ENCODE measurements at regions of chr19 and their contacts with region 1.

Region 1: DNA sequence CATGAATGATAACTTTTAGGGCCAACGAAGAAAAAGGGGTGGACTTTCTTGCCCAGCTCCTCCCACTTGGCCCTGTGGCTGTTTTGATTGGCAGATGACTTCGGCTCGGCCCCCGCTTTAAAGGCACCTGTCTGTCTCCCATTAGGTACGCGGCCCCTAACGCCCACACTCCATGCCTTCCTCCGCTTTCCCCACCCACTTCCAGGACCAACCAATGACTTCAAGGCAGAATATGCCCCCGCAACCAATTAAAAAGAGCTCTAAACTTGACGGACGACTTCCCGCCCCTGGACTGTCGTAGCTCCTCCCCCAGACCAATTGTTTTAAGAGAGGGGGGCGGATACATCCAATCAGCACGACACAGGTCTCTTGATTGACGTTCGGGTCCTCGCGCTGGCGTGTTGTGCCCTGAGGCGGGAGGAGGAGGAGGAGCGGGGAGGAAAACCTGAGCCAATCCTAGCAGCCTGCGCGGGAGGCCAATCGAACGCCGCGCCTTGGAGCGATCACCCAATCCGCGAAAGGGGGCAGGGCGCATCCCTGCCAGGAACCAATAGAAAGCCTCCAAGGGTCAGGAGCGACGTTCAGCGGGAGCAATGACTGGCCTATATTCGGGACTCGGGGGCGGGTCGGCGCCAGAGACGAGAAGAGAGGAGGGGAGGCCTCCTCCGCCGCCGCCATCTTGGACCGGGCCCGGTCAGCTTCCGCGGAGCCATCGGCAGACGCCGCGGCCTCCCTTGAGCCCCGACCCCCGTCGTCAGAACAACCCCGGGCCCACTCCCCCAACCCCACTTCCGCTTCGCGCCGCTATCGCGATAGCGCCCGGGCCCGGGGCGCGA is at the start of gene CNOT3:
- DNase-seq: peak; percentile 100
- ATAC-seq: peak; percentile 89
- H3K4me3 Mint-ChIP-seq: peak within 1 kb of the TSS; percentile 92
- H3K27ac Mint-ChIP-seq: peak within 1 kb of the TSS; percentile 98
- H3K4me1 Mint-ChIP-seq: peaks cover 35% of the 10 kb centered on the region
- H3K27me3 Mint-ChIP-seq: no peaks in the 10 kb centered on the region
- CTCF ChIP-seq: no peak
- total RNA-seq, gene CNOT3: 90.7 to 96.8 TPM (median 93.3 TPM) in 3 replicates

Region 2: DNA sequence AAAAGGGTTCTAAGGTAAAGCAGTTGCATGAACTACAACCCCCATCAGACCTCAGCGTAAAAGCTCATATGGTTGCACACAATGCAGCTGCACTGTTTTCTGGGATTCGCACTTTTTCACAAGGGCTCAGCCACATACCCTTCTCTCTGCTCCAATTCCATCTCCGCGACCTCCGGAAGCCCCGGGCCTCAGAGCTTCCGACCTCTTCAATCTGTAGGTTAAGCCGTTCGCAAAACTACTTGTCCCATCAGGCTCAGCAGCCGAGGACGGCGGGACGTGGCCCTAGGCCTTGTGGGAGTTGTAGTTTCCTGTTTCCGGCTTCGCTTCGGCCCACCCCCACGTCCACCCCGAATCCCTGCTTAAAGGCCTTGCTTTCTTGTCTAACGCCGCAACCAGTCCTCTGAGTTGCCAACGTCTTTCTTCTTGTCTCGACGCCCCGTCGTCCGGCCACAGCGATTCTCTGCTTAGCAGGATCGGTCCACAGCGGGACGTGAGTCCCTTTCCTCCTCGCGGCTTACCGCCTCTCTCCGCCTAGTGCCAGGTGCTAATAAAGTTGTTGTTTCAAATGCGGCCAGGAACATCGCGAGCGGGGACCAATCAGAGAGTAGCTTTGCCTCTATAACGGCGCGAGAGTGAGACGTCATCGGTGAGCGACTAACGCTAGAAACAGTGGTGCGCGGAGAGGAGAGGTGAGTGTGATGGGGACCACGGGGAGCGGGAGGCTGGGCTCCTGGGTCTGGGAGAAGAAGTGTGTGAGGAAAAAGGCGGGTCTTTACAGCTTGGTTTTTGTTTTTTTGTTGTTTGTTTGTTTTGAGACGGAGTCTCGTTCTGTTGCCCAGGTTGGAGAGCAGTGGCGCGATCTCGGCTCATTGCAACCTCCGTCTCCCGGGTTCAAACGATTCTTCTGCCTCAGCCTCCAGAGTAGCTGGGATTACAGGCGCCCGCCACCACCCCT is 21.9 kb before region 1 on chr19 and contains the starts of genes PRPF31 and TFPT:
- CTCF ChIA-PET with region 1: interaction called, 9 read pairs
- POLR2A ChIA-PET with region 1: interaction called, 23 read pairs
- DNase-seq: peak; percentile 97
- ATAC-seq: peak; percentile 93
- H3K4me3 Mint-ChIP-seq: peak within 1 kb of the TSS; percentile 95
- H3K27ac Mint-ChIP-seq: peak within 1 kb of the TSS; percentile 93
- H3K4me1 Mint-ChIP-seq: peaks cover 22% of the 10 kb centered on the region
- H3K27me3 Mint-ChIP-seq: no peaks in the 10 kb centered on the region; the same call in 1 of the 2 replicates
- CTCF ChIP-seq: no peak
- total RNA-seq, gene PRPF31: 82.3 to 92.8 TPM (median 89.5 TPM) in 3 replicates
- total RNA-seq, gene TFPT: 20.5 to 24.6 TPM (median 24.2 TPM) in 3 replicates

Region 3: GRCh38 chr19:54148158-54148919 is 11.0 kb after region 1 on chr19:
- CTCF ChIA-PET with region 1: no interaction called
- POLR2A ChIA-PET with region 1: interaction called, 11 read pairs
- DNase-seq: no peak
- ATAC-seq: no peak
- H3K4me3 Mint-ChIP-seq: no peak overlapping the region
- H3K27ac Mint-ChIP-seq: peak overlapping the region; percentile 53; the same call in 1 of the 2 replicates
- H3K4me1 Mint-ChIP-seq: no peaks in the 10 kb centered on the region
- H3K27me3 Mint-ChIP-seq: no peaks in the 10 kb centered on the region; the same call in 1 of the 2 replicates
- CTCF ChIP-seq: no peak

Region 4: DNA sequence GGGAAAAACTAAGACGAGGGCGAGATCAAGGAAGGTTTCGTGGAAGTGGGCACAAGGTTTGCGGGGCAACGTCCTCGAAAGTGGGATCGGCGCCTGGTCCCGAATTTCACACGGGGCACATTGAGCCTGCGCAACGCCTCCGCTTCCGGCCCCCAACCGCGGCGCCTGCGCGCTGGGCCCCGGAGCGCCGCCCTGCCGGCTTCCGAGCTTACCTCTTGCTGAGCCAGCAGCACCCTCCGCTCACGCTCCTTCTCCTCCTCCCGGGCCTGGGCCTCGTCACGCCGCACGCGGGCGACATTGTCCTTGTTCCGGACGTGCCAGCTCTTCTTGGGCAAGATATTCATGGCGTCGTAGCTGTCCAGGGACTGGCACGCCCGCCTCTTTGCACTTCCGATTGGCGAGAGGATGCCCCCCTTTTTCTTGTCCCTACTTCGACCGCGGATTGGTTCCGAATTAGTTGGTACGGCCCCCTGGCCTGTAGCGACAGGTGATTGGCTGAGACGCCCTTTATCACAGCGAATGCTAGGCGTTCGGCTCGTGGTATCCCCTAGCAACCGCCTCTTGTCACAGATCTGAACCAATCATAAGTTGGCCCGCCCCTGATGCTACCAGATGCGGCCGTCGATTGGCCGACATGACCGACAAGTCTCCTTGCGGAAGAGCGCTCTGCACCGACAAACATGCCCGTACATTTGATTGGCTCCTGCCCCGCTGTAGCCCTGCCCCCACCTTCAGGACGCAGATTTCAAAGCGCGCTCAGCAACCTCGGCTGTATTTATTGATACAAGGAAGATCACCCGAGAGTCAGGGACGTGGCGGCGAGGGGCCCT is 22.3 kb after region 1 on chr19 and contains the start of gene LENG1:
- CTCF ChIA-PET with region 1: interaction called, 7 read pairs
- POLR2A ChIA-PET with region 1: interaction called, 10 read pairs
- DNase-seq: peak; percentile 99
- ATAC-seq: peak; percentile 80
- H3K4me3 Mint-ChIP-seq: peak within 1 kb of the TSS; percentile 100
- H3K27ac Mint-ChIP-seq: peak within 1 kb of the TSS; percentile 99
- H3K4me1 Mint-ChIP-seq: peaks cover 35% of the 10 kb centered on the region
- H3K27me3 Mint-ChIP-seq: peaks cover 24% of the 10 kb centered on the region
- CTCF ChIP-seq: no peak
- total RNA-seq, gene LENG1: 4.6 to 5.4 TPM (median 4.9 TPM) in 3 replicates

Region 5: GRCh38 chr19:54281007-54281728 is 143.9 kb after region 1 on chr19 and contains the start of gene LILRB2:
- CTCF ChIA-PET with region 1: no interaction called
- POLR2A ChIA-PET with region 1: no interaction called
- DNase-seq: no peak
- ATAC-seq: no peak
- H3K4me3 Mint-ChIP-seq: no peak within 1 kb of the TSS
- H3K27ac Mint-ChIP-seq: no peak within 1 kb of the TSS
- H3K4me1 Mint-ChIP-seq: no peaks in the 10 kb centered on the region
- H3K27me3 Mint-ChIP-seq: peaks cover 11% of the 10 kb centered on the region
- CTCF ChIP-seq: no peak
- total RNA-seq, gene LILRB2: 0.11 TPM in 1 of 3 replicates, not detected in the others